Activated CD4-positive, alpha-beta T cell treated with anti-CD3 and anti-CD28 coated beads for 36 hours (primary cell): ENCODE measurements at regions of chr9 and their contacts with region 1.

Region 1: DNA sequence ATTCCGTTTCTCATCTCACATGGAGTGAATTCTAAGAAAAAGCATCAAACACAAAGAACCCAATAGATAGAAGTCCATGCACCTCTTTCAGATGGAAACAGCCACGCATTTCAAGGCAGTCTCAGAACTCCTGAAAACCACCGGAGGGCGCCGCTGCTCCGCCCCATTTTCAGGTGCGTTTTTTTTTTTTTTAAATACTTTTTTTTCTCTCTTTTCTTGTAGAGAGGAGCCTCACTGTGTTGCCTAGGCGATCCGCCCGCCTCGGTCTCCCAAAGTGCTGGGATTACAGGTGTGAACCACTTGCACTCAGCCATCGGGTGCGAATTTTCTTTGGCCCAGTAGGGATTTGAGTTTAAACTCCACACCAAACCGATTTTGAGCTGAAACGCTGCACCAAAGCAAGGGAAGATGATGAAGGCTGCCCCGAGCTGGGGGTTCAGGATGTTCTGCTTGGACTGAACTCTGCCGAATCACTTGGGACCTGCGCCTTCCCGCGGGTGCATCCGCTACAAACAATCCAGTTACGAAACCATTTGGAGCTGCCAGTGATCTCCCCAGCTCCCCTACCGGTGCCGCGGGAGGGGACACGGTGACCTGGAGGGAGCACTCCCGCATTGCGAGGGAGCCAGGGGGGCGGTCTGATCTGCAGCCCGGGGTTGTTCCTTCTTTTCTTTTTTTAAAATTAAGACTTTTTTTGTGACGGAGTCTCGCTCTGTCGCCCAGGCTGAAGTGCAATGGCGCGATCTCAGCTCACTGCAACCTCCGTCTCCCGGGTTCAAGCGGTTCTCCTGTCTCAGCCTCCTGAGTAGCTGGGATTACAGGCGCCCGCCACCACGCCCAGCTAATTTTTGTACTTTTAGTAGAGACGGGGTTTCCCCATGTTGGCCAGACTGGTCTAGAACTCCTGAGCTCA is 1.4 kb downstream of the PTGR1 start:
- DNase-seq: peak; percentile 78
- ATAC-seq: peak; percentile 70
- H3K4me3 Mint-ChIP-seq: peak overlapping the region; percentile 75
- H3K27ac Mint-ChIP-seq: peak overlapping the region; percentile 33
- H3K4me1 Mint-ChIP-seq: peaks cover 21% of the 10 kb centered on the region
- H3K27me3 Mint-ChIP-seq: peaks cover 23% of the 10 kb centered on the region

Region 2: GRCh38 chr9:111621895-111622480 is 23.9 kb after region 1 on chr9:
- CTCF ChIA-PET with region 1: interaction called, 28 read pairs
- POLR2A ChIA-PET with region 1: no interaction called
- intact Hi-C with region 1: loop called in 1 of 2 experiments (anchors 1 kb)
- DNase-seq: peak; percentile 52
- ATAC-seq: peak; percentile 78
- H3K4me3 Mint-ChIP-seq: no peak overlapping the region
- H3K27ac Mint-ChIP-seq: no peak overlapping the region
- H3K4me1 Mint-ChIP-seq: no peaks in the 10 kb centered on the region
- H3K27me3 Mint-ChIP-seq: peaks cover 7% of the 10 kb centered on the region

Region 3: DNA sequence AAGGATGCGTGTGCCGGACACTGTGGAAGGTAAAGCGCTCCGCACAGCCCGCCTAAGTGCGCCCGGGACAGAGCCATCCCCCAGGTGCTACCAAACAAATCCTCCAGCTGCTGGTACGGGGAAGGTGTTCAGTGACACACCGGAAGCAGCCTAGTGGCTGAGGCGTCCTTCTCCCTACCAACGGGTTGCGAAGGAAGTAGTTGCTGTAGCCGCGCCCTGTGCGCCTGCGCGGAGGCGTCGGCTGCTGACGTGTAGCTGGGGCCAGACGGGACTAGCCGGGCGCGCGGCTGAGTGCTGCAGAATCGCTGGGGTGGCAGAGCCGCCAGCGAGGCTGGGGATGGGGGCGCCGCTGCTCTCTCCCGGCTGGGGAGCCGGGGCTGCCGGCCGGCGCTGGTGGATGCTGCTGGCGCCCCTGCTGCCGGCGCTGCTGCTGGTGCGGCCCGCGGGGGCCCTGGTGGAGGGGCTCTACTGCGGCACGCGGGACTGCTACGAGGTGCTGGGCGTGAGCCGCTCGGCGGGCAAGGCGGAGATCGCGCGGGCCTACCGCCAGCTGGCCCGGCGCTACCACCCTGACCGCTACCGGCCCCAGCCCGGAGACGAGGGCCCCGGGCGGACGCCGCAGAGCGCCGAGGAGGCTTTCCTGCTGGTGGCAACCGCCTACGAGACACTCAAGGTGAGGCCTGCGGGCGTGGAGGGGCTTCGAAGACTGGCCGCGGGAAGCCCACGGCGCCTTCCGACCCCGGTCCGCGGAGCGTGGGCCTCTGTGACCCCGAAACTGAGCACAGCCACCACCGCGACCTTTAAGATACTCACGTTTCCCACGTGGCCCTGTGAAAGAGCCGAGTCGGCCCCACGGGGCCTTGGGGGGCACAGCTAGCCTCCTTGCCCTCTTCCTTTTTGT is 33.2 kb after region 1 on chr9 and contains the start of gene DNAJC25:
- CTCF ChIA-PET with region 1: interaction called, 6 read pairs
- POLR2A ChIA-PET with region 1: no interaction called
- intact Hi-C with region 1: loop called (anchors 2 to 5 kb)
- DNase-seq: peak; percentile 98
- ATAC-seq: peak; percentile 98
- H3K4me3 Mint-ChIP-seq: peak within 1 kb of the TSS; percentile 94
- H3K27ac Mint-ChIP-seq: peak within 1 kb of the TSS; percentile 91
- H3K4me1 Mint-ChIP-seq: peaks cover 47% of the 10 kb centered on the region
- H3K27me3 Mint-ChIP-seq: no peaks in the 10 kb centered on the region
- total RNA-seq, gene DNAJC25: 6.3 to 7.5 TPM

Region 4: DNA sequence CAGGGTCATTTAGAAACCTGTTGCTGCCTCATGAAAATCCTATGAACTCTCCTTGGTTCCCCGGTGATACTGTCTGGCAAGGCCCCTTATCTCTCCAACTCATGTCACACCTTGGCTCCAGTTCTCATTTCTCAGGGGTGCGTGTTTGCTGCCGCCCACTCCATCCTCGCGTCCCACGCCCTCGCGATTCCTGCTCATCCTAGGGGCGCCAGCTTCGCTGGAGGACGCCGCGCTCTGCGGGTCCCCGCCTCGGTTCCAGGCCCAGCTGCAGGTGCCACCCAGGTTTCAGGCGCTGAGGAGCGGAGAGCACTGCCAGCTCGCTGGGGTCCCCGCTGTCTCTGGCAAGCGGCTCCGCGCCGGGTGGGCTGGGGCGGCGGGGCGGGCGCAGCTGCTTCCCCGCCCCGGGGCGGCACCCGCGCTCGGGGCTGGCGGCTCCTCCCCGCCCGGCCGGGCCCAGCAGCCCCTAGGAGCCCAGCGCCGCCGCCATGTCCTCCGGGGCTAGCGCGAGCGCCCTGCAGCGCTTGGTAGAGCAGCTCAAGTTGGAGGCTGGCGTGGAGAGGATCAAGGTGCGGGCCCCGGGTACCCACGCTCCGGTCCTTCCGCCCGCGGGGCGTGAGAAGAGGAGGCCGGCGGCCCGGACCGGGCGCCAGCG is 63.2 kb after region 1 on chr9 and contains the start of gene GNG10:
- CTCF ChIA-PET with region 1: interaction called, 4 read pairs
- POLR2A ChIA-PET with region 1: no interaction called
- intact Hi-C with region 1: loop called in 1 of 2 experiments (anchors 1 kb)
- DNase-seq: peak; percentile 81
- ATAC-seq: peak; percentile 92
- H3K4me3 Mint-ChIP-seq: peak within 1 kb of the TSS; percentile 98
- H3K27ac Mint-ChIP-seq: peak within 1 kb of the TSS; percentile 95
- H3K4me1 Mint-ChIP-seq: peaks cover 25% of the 10 kb centered on the region
- H3K27me3 Mint-ChIP-seq: no peaks in the 10 kb centered on the region
- total RNA-seq, gene GNG10: 14.5 to 15.4 TPM

Region 5: DNA sequence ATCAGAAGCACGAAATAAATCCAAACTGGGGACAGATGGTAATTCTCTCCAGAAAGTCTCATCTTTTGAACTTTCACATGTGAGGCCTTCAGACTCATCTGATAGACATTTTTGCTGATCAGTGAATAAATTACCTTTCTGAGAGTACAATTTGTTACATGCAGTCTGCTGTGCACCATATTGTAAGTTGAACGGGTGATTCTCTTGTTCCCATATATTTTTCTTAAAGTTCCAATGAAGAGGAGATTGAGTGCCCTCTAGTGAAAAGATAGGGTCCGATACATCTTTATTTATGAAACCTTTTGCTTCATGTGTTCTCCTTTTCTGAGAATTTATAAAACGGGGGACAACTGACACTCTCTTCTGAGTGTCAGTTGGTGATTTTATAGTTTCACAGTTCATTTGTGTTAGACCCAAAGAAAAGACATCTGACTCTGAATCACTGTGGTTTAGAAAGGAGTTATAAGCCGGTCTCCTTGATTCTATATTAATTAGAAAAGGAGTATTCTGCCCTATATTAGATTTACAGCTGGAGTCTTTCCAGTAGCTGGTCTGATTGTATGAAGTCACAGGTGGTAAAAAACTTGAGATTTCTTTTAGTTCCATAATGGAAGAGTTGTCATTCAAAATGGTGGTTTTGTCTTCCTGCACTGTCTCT is 93.7 kb after region 1 on chr9:
- CTCF ChIA-PET with region 1: interaction called, 3 read pairs
- POLR2A ChIA-PET with region 1: no interaction called
- intact Hi-C with region 1: loop called (anchors 1 to 2 kb)
- DNase-seq: no peak
- ATAC-seq: no peak
- H3K4me3 Mint-ChIP-seq: no peak overlapping the region
- H3K27ac Mint-ChIP-seq: no peak overlapping the region
- H3K4me1 Mint-ChIP-seq: peaks cover 2% of the 10 kb centered on the region
- H3K27me3 Mint-ChIP-seq: no peaks in the 10 kb centered on the region

Region 6: GRCh38 chr9:111743275-111743674 is 145.2 kb after region 1 on chr9:
- CTCF ChIA-PET with region 1: no interaction called
- POLR2A ChIA-PET with region 1: no interaction called
- intact Hi-C with region 1: no loop called
- DNase-seq: peak; percentile 62
- ATAC-seq: peak; percentile 100
- H3K4me3 Mint-ChIP-seq: no peak overlapping the region
- H3K27ac Mint-ChIP-seq: peak overlapping the region; percentile 81
- H3K4me1 Mint-ChIP-seq: peaks cover 18% of the 10 kb centered on the region
- H3K27me3 Mint-ChIP-seq: no peaks in the 10 kb centered on the region

Region 7: DNA sequence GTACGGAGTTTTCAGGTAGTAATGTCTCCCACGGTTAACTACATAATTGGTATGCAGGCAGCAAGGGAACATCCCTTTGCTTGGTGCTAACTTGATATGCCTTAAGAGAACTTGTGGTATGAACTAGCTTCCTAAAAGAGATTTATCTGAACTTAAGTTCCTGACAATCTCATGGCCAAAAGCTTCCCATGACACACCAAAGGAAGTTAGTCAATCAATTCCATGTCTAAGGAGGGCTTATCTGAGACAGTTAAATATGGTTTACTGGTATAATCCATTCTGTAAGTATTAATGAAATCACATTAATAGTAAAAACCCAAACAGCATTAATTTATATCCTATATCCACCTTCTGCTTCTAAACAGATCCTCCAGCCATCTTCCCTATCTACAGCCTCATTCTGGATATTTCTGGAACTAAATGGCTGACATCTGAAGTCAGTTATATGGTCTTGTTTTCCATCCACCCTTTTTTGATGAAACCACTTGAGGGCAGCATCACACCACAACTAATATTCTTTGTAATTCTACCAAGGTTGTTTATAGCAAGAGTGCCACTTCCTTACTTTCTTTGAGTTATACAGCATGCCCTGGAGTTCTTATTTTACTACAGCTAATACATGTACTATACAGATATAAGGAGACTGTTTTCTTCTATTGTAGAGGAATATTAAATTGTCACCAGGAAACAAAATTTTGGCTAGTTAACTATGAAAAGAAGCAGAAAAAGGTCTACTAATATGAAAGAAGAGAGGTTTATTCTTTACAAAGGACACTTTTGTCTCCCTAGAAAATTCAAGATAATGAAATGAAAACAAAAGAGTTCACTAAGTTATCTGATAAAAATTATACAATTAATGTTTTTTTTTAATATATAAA is 161.9 kb after region 1 on chr9:
- CTCF ChIA-PET with region 1: interaction called, 3 read pairs
- POLR2A ChIA-PET with region 1: no interaction called
- intact Hi-C with region 1: loop called in 1 of 2 experiments (anchors 2 kb)
- DNase-seq: peak; percentile 57
- ATAC-seq: peak; percentile 70
- H3K4me3 Mint-ChIP-seq: no peak overlapping the region
- H3K27ac Mint-ChIP-seq: peak overlapping the region; percentile 3
- H3K4me1 Mint-ChIP-seq: peaks cover 4% of the 10 kb centered on the region
- H3K27me3 Mint-ChIP-seq: no peaks in the 10 kb centered on the region

Region 8: DNA sequence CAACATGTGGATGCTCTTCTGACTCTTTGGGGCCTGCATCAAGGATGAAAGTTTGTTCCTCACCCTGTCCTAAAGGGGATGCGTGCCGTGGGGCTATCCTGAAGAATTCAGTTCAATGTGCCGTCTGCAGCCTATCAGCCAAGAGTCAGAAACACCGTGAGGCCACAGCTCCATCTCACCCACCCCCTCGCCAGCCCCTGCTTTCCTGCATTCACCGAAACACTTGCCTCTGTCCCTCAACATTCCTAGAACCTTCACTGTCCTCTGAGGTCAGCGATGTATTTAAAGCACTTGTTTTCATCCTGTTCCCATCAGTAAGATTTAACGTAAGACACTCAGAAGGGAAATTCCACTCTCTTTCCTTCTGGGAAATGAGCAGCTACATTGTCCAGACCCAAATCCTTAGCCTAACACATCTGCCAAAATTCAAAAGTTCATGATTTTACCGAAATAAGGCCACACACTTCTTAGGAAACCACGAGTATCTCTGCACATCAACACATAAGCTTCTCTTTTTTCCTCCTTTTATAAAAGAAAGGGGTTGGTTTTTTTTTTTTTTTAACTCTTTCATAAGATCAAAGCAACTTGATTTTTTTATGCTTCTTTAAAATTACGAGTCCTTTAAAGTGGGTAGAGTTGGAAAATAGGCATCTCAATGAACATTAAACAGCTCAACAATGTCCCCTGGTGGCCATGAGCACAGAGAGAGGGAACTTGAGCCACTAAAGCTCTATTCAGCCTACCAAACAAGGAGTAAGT is 476.4 kb after region 1 on chr9:
- CTCF ChIA-PET with region 1: interaction called, 11 read pairs
- POLR2A ChIA-PET with region 1: interaction called, 3 read pairs
- intact Hi-C with region 1: loop called (anchors 1 to 2 kb)
- DNase-seq: peak; percentile 81
- ATAC-seq: peak; percentile 85
- H3K4me3 Mint-ChIP-seq: no peak overlapping the region
- H3K27ac Mint-ChIP-seq: peak overlapping the region; percentile 72
- H3K4me1 Mint-ChIP-seq: peaks cover 35% of the 10 kb centered on the region
- H3K27me3 Mint-ChIP-seq: peaks cover 4% of the 10 kb centered on the region